Posterior vena cava (tissue), 2 donors: ENCODE measurements at regions of chr12 and their contacts with region 1.

Region 1: GRCh38 chr12:43882578-43883178 is 46.8 kb downstream of the TMEM117 start:
- DNase-seq: no peak

Region 2: DNA sequence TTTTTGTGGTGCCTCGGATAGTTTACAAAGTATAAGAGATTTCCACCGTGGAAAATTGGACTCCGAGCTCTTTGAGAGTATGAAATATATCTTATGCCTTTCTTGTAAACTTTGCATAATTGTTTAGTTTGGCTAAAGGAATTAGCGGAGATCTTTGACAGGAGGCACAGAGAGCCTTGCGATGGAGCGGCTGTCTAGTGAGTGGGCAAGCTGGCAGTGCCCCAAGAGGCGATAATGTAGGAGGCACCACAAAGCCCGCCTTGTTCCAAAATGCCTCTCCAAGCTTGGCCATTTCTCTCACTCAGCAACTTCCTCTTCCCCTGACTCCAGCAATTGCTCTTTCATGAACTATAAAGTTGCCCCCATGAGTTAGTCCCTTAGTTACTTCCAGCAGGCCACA is 1023.1 kb before region 1 on chr12:
- intact Hi-C with region 1: no loop called
- DNase-seq: no peak

Region 3: GRCh38 chr12:43586646-43587245 is 295.9 kb before region 1 on chr12:
- intact Hi-C with region 1: no loop called
- DNase-seq: no peak

Region 4: GRCh38 chr12:43676183-43676813 is 206.4 kb before region 1 on chr12:
- intact Hi-C with region 1: no loop called
- DNase-seq: no peak

Region 5: DNA sequence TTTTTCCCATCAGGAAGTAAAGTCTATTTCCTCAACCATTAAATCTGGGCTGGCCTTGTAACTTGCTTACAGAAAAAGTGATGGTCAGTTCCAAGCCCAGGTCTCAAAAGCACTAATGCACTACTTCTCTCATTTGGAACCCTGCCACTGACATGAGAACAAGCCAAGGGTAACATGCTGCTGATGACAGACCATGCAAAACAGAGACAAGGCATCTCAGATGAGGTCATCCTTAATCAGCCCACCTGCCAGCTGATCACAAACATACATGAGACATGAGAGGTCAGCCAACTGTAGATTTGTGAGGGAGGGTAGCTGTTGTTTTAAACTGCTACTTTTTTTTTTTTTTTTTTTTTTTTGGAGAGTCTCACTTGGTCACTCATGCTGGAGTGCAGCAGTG is 92.7 kb before region 1 on chr12:
- intact Hi-C with region 1: no loop called
- DNase-seq: no peak

Region 6: GRCh38 chr12:43805860-43806736 is 76.6 kb before region 1 on chr12 and contains the start of gene TWF1:
- intact Hi-C with region 1: loop called in 1 of 2 experiments (anchors 10 kb)
- DNase-seq: peak; percentile 97
- total RNA-seq, gene TWF1: 104 to 110 TPM